ENCODE measurements at regions of chr18 and their contacts with region 1.

Region 1: GRCh38 chr18:50819728-50820378 is at the start of gene MRO:
- DNase-seq: peak; percentile 80
- H3K4me3 Mint-ChIP-seq: no peak within 1 kb of the TSS
- H3K27ac Mint-ChIP-seq: no peak within 1 kb of the TSS
- H3K4me1 Mint-ChIP-seq: peaks cover 10% of the 10 kb centered on the region
- H3K27me3 Mint-ChIP-seq: no peaks in the 10 kb centered on the region
- CTCF ChIP-seq: peak; percentile 97
- total RNA-seq, gene MRO: not detected in 2 replicates

Region 2: GRCh38 chr18:50507120-50507590 is 312.7 kb before region 1 on chr18:
- CTCF ChIA-PET with region 1: interaction called, 20 read pairs
- POLR2A ChIA-PET with region 1: no interaction called
- intact Hi-C with region 1: loop called (anchors 1 kb)
- DNase-seq: peak; percentile 63
- H3K4me3 Mint-ChIP-seq: no peak overlapping the region
- H3K27ac Mint-ChIP-seq: no peak overlapping the region
- H3K4me1 Mint-ChIP-seq: no peaks in the 10 kb centered on the region
- H3K27me3 Mint-ChIP-seq: peaks cover 47% of the 10 kb centered on the region
- CTCF ChIP-seq: peak; percentile 89

Region 3: DNA sequence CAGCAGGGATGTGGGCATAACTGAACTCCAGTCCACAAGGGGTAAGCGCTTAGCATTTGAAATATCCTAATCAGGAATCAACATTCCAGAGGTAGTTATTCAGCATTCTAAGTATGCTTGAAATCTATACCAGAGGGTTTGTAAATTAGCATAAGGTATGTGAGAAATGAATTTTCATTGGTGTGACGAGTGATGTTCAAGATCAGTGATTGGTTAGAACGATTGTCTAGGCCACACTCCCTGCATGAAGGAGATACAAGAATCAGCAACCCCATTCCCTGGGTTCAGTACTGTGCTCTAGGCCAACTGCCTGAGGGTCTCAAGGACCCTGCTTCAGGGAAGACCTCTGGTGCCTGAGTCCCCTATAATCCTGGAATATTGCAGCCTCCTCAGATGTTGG is 217.3 kb before region 1 on chr18:
- CTCF ChIA-PET with region 1: no interaction called
- POLR2A ChIA-PET with region 1: no interaction called
- intact Hi-C with region 1: no loop called
- DNase-seq: no peak
- H3K4me3 Mint-ChIP-seq: no peak overlapping the region
- H3K27ac Mint-ChIP-seq: no peak overlapping the region
- H3K4me1 Mint-ChIP-seq: no peaks in the 10 kb centered on the region
- H3K27me3 Mint-ChIP-seq: peaks cover 14% of the 10 kb centered on the region
- CTCF ChIP-seq: no peak

Region 4: DNA sequence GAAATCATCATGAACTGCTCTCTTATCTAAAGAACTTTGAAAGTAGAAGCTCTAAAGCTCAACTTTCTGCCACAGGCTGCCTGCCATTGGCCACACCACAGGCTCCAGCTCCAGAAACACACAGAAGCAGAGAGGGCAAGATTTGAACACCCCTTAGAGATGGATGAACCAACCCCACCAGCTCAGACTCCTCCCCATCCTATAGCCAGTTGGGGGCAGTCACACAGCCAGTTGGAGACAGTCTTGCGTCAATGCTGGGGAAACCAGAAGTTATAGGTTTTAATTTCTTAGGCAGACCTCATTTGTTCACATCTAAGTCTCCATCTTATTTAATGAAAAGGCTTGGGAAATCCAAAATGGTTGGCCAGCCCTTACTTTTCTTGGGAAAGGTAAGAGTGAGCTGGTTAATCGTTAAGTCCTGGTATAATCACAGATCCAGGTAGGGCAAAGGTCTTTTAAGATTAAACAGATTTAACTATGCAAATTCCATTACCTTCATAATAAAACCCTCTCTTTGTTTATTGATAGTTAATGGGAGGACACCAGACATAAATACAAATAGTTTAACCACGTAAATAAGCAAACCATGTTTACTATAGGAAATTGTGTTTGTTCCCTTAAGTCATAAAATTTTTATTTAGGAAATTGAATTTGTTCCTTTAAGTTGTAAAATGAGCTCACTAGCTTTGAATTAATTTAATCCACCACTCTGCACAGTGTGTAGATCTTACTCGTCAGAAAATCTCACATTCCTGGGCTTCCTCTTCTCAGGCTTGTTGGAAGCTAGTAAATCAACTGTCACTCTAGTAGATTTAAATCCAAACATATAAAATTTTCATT is 28.0 kb before region 1 on chr18:
- CTCF ChIA-PET with region 1: no interaction called
- POLR2A ChIA-PET with region 1: no interaction called
- intact Hi-C with region 1: no loop called
- DNase-seq: no peak
- H3K4me3 Mint-ChIP-seq: no peak overlapping the region
- H3K27ac Mint-ChIP-seq: no peak overlapping the region
- H3K4me1 Mint-ChIP-seq: no peaks in the 10 kb centered on the region
- H3K27me3 Mint-ChIP-seq: peaks cover 32% of the 10 kb centered on the region
- CTCF ChIP-seq: no peak

Region 5: GRCh38 chr18:50830544-50830943 is 10.7 kb after region 1 on chr18:
- CTCF ChIA-PET with region 1: interaction called, 28 read pairs
- POLR2A ChIA-PET with region 1: no interaction called
- intact Hi-C with region 1: no loop called
- DNase-seq: no peak
- H3K4me3 Mint-ChIP-seq: no peak overlapping the region
- H3K27ac Mint-ChIP-seq: no peak overlapping the region
- H3K4me1 Mint-ChIP-seq: no peaks in the 10 kb centered on the region
- H3K27me3 Mint-ChIP-seq: no peaks in the 10 kb centered on the region
- CTCF ChIP-seq: no peak

Region 6: DNA sequence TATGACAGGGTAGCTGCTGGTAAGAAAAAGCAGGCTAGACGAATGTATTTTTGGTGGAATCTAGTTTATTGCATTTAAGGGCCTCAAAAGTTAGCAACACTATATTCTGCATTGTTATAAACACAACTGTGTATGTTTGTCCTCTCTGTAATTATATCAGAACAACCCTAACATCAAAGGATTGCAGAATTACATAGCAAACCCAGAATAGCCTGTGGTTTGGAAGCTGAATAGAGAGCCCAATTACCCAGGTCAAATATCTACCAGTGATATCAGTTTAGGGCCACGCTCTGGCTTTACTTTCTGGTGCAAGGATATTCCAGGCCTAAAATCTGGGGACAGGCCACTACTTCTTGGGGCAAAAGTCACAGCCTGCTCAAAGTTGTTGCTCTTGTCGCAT is 25.1 kb after region 1 on chr18:
- CTCF ChIA-PET with region 1: interaction called, 13 read pairs
- POLR2A ChIA-PET with region 1: interaction called, 3 read pairs
- intact Hi-C with region 1: no loop called
- DNase-seq: no peak
- H3K4me3 Mint-ChIP-seq: no peak overlapping the region
- H3K27ac Mint-ChIP-seq: no peak overlapping the region
- H3K4me1 Mint-ChIP-seq: peaks cover 11% of the 10 kb centered on the region
- H3K27me3 Mint-ChIP-seq: no peaks in the 10 kb centered on the region
- CTCF ChIP-seq: no peak

Region 7: DNA sequence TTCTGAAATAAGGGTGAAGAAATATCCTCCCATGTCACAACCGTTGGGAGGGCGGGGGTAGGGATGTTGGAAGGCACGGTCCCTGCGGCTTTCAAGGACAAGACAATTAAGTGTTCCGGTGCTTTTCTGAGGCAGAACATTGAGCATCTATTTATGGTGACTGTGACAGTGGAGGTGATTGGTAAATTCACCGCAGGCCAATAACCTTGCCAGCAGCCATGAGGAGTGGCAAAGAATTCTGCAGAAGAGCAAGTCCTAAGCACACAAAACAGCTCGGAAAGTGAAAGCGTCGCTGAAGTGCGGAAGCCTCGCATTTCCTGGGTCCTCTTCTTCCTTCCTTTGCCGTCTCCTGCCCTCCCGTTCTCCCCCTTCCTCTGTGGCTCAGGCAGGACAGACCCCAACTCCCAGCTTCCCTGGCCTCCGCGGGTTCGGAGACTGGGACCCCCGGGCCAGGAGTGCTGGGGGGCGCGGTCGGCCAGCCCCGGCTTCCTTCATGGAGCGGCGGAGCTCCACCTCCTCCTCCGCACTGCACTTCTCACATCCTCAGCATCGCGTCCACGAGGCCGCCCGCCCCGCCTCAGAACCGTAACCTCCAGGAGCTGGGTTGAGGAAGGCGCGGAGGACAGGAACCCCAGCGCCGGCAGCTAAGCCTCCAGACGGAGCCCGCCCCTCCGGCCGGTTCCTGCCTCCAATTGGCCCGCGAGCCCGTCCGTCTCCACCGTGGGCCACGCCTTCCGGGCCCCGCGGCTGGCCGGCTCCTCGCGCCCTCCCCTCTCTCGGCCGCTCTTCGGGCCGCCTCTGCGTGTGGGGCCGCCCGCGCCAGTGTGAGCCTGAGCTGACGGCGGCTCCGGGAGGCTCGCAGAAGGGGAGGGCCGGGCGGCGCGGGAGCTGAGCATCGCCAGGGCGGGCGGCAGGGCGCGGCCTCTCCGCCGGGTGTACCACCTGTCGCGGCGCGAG is 58.8 kb after region 1 on chr18 and contains the start of gene ME2:
- CTCF ChIA-PET with region 1: interaction called, 13 read pairs
- POLR2A ChIA-PET with region 1: interaction called, 23 read pairs
- intact Hi-C with region 1: no loop called
- DNase-seq: peak; percentile 90
- H3K4me3 Mint-ChIP-seq: peak within 1 kb of the TSS; percentile 88
- H3K27ac Mint-ChIP-seq: peak within 1 kb of the TSS; percentile 93
- H3K4me1 Mint-ChIP-seq: peaks cover 8% of the 10 kb centered on the region
- H3K27me3 Mint-ChIP-seq: no peaks in the 10 kb centered on the region
- CTCF ChIP-seq: no peak
- total RNA-seq, gene ME2: 64.8 and 67.2 TPM in 2 replicates

Region 8: DNA sequence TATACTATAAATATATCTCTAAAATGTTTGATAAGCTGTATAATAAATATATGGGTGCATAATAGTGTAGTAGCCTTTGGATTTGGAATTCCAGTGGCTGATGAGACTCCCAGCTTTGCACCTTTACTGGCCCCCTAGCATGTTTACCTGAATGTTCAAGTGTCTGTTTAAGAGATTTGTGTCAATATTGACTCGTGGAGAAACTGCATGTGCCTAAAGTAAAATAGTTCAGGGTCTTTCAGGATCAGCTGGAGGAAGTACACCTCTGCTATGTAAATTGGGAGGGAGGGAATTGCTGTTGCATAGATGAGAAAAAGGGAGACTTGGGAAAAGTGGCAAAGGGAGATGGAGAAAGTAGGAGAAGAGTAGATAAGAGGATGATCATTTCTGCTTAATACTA is 82.9 kb after region 1 on chr18:
- CTCF ChIA-PET with region 1: no interaction called
- POLR2A ChIA-PET with region 1: no interaction called
- intact Hi-C with region 1: no loop called
- DNase-seq: no peak
- H3K4me3 Mint-ChIP-seq: no peak overlapping the region
- H3K27ac Mint-ChIP-seq: no peak overlapping the region
- H3K4me1 Mint-ChIP-seq: no peaks in the 10 kb centered on the region
- H3K27me3 Mint-ChIP-seq: no peaks in the 10 kb centered on the region
- CTCF ChIP-seq: no peak

Region 9: DNA sequence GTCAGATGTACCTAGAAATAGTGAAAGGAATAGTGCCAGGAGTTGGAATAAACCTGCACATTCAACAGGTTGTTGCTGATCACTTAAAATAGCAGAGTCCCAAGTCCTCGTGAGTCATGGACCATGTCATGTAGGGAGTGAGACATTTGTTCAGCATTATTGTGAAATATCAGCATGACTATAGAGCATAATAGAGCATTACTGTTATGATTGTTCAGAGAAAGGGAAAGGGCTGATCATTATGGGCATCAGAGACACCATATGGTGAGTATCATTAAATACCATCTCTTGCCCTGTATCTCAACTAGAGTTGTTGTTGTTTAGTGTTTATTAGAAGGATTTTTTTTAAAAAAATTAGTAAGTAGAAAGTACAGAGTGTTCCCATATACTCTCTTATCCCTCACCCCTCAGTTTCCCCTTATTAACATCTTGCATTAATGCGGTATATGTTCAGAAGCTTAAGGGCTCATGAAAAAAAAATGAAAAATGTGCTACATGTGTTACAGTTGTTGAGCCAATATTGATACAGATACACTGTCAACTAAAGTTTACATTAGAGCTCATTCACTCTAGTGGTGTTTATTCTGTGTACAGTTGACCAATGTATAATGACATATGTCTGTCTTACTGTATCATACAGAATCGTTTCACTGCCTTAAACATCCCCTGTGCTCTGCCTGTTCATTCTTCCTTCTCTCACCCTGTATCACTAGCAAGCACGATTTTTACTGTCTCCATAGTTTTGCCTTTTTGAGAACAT is 153.7 kb after region 1 on chr18:
- CTCF ChIA-PET with region 1: interaction called, 12 read pairs
- POLR2A ChIA-PET with region 1: interaction called, 7 read pairs
- intact Hi-C with region 1: loop called (anchors 1 kb)
- DNase-seq: peak; percentile 84
- H3K4me3 Mint-ChIP-seq: no peak overlapping the region
- H3K27ac Mint-ChIP-seq: peak overlapping the region; percentile 46
- H3K4me1 Mint-ChIP-seq: peaks cover 39% of the 10 kb centered on the region
- H3K27me3 Mint-ChIP-seq: no peaks in the 10 kb centered on the region
- CTCF ChIP-seq: no peak

Region 10: DNA sequence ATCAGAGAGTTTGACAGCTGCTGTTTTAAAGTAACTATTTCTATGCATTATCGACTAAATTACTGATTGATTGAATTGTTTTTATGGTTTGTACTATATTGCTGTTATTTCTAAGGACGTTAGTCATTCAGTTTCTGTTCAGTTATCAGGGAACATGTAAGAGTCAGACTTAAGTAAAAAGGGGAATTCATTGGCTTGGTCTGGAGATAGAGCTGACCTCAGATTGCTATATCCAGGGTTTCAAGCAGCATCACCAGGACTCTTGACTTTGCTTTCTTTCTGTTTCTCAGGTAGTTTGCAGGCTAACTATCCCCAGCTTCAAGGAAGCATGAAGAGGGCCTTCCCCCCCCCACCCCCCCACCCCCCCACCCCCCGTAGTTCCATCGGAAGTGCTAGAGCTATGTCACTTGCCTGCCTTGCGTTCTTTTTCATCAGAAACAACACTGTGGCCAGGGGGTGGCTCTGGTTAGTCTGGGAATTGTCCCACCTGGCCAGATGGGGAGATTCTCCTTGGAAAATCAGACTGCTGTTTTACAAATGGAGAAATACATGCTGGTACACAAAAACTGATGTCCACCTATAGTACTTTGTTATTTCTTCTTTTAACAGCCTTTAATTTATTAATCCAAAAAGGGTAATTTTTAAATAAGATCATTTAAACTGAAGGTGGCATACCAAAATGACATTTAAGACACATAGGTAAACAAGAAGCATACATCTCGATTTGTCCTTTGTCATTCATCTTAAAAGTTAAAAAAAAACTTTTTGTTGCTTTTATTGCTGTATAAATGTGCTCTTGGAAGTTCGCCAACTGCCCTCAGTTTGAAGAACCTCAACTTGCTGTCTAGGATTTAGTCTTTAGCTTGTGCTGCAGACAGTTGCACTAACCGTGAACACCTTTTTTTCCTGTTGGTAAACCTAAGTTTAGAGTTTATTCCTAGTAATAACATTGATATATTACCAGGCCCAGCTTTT is 219.6 kb after region 1 on chr18:
- CTCF ChIA-PET with region 1: interaction called, 11 read pairs
- POLR2A ChIA-PET with region 1: no interaction called
- intact Hi-C with region 1: no loop called
- DNase-seq: no peak
- H3K4me3 Mint-ChIP-seq: no peak overlapping the region
- H3K27ac Mint-ChIP-seq: peak overlapping the region; percentile 19
- H3K4me1 Mint-ChIP-seq: peaks cover 43% of the 10 kb centered on the region
- H3K27me3 Mint-ChIP-seq: no peaks in the 10 kb centered on the region
- CTCF ChIP-seq: no peak

Measured in MCF 10A (cell line).